ENCODE measurements at regions of chr11 and their contacts with region 1.

Region 1: DNA sequence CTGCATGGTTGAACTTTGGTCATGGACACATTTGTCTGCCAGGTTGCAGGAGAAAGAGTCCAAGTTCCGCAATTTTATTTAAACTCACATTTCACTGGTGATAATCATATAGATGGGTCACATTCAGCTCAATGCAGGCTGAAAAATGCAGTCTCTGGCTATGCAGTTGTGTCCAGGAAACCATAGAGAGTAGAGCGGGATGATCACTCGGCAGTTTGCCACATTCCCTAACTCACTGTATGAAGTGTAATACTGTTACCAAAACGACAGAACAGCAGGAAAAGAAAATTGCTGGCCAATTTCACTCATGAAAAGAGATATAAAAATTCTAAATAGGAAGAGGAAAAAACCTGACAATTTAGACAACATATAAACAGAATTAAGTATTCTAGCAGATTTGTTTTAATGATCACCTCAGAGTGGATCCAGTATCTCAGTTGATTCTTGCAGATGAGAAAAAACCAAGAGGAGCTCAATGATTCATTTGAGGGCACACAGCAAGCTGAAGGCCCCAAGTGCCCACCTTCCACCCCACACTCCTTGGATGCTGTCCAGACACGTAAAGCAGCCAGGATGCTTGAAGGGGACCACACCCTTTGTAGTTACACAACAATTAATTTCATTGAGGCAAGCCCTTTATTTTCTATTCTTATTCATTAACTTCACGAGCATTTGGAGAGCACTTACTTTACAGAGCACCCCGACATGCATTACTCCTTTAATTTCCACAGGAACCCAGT is 422.3 kb downstream of the SOX6 start:
- DNase-seq: no peak
- ATAC-seq: no peak
- H3K4me3 ChIP-seq: no peak overlapping the region
- H3K4me3 Mint-ChIP-seq: no peak overlapping the region
- H3K27ac ChIP-seq: no peak overlapping the region
- H3K27ac Mint-ChIP-seq: no peak overlapping the region
- H3K4me1 ChIP-seq: no peaks in the 10 kb centered on the region
- H3K4me1 Mint-ChIP-seq: no peaks in the 10 kb centered on the region
- H3K27me3 ChIP-seq: no peaks in the 10 kb centered on the region
- H3K27me3 Mint-ChIP-seq: peaks cover 0 to 2% (median 0%) of the 10 kb centered on the region in 5 donors

Region 2: DNA sequence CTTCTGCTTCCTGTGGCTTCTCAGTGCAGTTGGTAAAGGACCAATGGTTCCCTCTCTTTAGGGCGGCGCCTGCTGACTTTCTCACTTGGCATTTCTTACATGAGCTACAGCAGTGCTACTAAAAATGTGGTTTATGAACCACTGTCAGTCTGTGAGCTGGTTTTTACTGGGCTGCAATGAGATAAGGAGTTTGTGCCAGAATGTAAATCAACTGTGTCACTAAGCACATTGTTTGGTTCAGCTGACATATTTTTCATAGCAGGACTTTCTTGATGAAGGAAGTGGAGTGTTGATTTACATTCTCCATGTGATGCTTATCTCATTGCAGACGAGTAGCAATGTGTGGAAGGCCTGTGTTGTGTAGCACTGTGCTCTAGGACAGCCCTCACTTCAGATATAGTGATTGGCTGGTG is 41.0 kb before region 1 on chr11:
- CTCF ChIA-PET with region 1: no interaction called
- POLR2A ChIA-PET with region 1: no interaction called
- intact Hi-C with region 1: loop called in 1 of 2 experiments (anchors 1 kb)
- DNase-seq: no peak
- ATAC-seq: no peak
- H3K4me3 ChIP-seq: no peak overlapping the region
- H3K4me3 Mint-ChIP-seq: no peak overlapping the region
- H3K27ac ChIP-seq: no peak overlapping the region
- H3K27ac Mint-ChIP-seq: no peak overlapping the region
- H3K4me1 ChIP-seq: no peaks in the 10 kb centered on the region
- H3K4me1 Mint-ChIP-seq: no peaks in the 10 kb centered on the region
- H3K27me3 ChIP-seq: no peaks in the 10 kb centered on the region
- H3K27me3 Mint-ChIP-seq: peaks cover 0 to 4% (median 0%) of the 10 kb centered on the region in 5 donors

Region 3: DNA sequence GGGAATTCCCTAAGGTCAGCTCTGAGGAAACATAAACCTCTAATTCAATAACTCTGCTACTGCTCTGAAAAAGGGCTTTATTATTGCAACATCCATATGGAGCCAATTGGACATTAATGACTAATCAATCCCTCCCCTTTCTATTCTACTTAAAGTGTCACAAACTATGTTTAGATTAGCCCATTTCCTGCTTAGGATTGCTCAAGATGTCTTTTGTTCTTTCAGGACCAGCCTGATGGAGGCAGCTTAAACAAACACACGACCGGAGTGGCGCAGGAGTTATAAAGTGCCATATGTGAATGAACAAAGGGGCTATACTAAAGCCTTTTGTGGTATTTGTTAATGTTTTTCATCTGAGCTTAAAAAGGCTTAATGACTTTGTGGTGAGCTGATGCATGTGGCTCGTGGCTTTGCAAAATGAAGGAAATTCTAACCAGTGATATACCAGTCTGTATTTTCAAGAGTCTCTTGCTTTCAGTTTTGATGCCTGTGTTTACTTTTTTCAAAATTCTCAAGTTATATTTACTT is 67.9 kb after region 1 on chr11:
- CTCF ChIA-PET with region 1: no interaction called
- POLR2A ChIA-PET with region 1: no interaction called
- intact Hi-C with region 1: no loop called
- DNase-seq: no peak
- ATAC-seq: no peak
- H3K4me3 ChIP-seq: no peak overlapping the region
- H3K4me3 Mint-ChIP-seq: peak overlapping the region in 1 of 10 donors; percentile 8
- H3K27ac ChIP-seq: no peak overlapping the region
- H3K27ac Mint-ChIP-seq: no peak overlapping the region
- H3K4me1 ChIP-seq: no peaks in the 10 kb centered on the region
- H3K4me1 Mint-ChIP-seq: peaks cover 0 to 4% (median 0%) of the 10 kb centered on the region in 7 donors
- H3K27me3 ChIP-seq: no peaks in the 10 kb centered on the region
- H3K27me3 Mint-ChIP-seq: no peaks in the 10 kb centered on the region

Measured in naive thymus-derived CD4-positive, alpha-beta T cell (primary cell).